Panc1 (cell line): ENCODE measurements at regions of chr3 and their contacts with region 1.

Region 1: GRCh38 chr3:71530903-71531530 is 52.5 kb downstream of the FOXP1 start:
- DNase-seq: no peak
- ATAC-seq: no peak
- H3K4me3 ChIP-seq: no peak overlapping the region
- H3K27ac ChIP-seq: no peak overlapping the region
- H3K4me1 ChIP-seq: no peaks in the 10 kb centered on the region
- H3K27me3 ChIP-seq: no peaks in the 10 kb centered on the region
- CTCF ChIP-seq: no peak

Region 2: GRCh38 chr3:71369701-71370391 is 161.2 kb before region 1 on chr3:
- CTCF ChIA-PET with region 1: no interaction called
- POLR2A ChIA-PET with region 1: no interaction called
- in situ Hi-C with region 1: no loop called
- intact Hi-C with region 1: no loop called
- DNase-seq: no peak
- ATAC-seq: no peak
- H3K4me3 ChIP-seq: no peak overlapping the region
- H3K27ac ChIP-seq: no peak overlapping the region
- H3K4me1 ChIP-seq: no peaks in the 10 kb centered on the region
- H3K27me3 ChIP-seq: no peaks in the 10 kb centered on the region
- CTCF ChIP-seq: no peak

Region 3: GRCh38 chr3:71397046-71397445 is 134.0 kb before region 1 on chr3:
- CTCF ChIA-PET with region 1: no interaction called
- POLR2A ChIA-PET with region 1: no interaction called
- in situ Hi-C with region 1: no loop called
- intact Hi-C with region 1: no loop called
- DNase-seq: peak; percentile 5
- ATAC-seq: no peak
- H3K4me3 ChIP-seq: no peak overlapping the region
- H3K27ac ChIP-seq: no peak overlapping the region
- H3K4me1 ChIP-seq: no peaks in the 10 kb centered on the region
- H3K27me3 ChIP-seq: no peaks in the 10 kb centered on the region
- CTCF ChIP-seq: peak; percentile 50

Region 4: GRCh38 chr3:71548705-71549384 is 17.8 kb after region 1 on chr3:
- CTCF ChIA-PET with region 1: interaction called, 11 read pairs
- POLR2A ChIA-PET with region 1: no interaction called
- in situ Hi-C with region 1: no loop called
- intact Hi-C with region 1: no loop called
- DNase-seq: no peak
- ATAC-seq: no peak
- H3K4me3 ChIP-seq: no peak overlapping the region
- H3K27ac ChIP-seq: no peak overlapping the region
- H3K4me1 ChIP-seq: no peaks in the 10 kb centered on the region
- H3K27me3 ChIP-seq: no peaks in the 10 kb centered on the region
- CTCF ChIP-seq: no peak

Region 5: DNA sequence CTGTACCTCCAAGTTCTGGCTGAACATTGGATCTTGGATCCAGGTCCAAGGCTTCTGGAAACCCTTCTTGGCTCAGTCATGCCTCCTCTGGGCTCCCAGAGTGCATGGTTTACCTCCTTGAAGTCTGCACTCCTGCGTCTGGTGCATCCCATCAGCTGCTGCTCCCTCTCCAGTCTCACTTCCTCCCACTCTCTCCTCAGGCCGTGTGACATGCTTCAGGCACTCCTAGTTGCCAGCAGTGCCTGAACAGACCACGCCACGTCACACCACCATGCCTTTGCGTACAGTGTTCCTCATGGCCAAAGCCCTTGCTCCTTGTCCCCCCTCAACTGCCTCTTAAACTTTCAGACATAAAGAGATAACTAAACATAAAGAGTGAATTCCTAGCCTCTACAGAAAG is 228.4 kb after region 1 on chr3:
- CTCF ChIA-PET with region 1: no interaction called
- POLR2A ChIA-PET with region 1: no interaction called
- in situ Hi-C with region 1: no loop called
- intact Hi-C with region 1: no loop called
- DNase-seq: no peak
- ATAC-seq: no peak
- H3K4me3 ChIP-seq: no peak overlapping the region
- H3K27ac ChIP-seq: no peak overlapping the region
- H3K4me1 ChIP-seq: no peaks in the 10 kb centered on the region
- H3K27me3 ChIP-seq: peaks cover 2% of the 10 kb centered on the region; the same call in 1 of the 2 replicates
- CTCF ChIP-seq: no peak